Calu3 (cell line): ENCODE measurements at regions of chr9 and their contacts with region 1.

Region 1: GRCh38 chr9:83062656-83063527 is at the start of gene RASEF:
- DNase-seq: peak; percentile 91
- H3K4me3 Mint-ChIP-seq: peak within 1 kb of the TSS; percentile 85
- H3K27ac Mint-ChIP-seq: peak within 1 kb of the TSS; percentile 86
- H3K4me1 Mint-ChIP-seq: peaks cover 37% of the 10 kb centered on the region
- H3K27me3 Mint-ChIP-seq: no peaks in the 10 kb centered on the region
- CTCF ChIP-seq: no peak
- total RNA-seq, gene RASEF: 38.8 and 47.7 TPM in 2 replicates

Region 2: DNA sequence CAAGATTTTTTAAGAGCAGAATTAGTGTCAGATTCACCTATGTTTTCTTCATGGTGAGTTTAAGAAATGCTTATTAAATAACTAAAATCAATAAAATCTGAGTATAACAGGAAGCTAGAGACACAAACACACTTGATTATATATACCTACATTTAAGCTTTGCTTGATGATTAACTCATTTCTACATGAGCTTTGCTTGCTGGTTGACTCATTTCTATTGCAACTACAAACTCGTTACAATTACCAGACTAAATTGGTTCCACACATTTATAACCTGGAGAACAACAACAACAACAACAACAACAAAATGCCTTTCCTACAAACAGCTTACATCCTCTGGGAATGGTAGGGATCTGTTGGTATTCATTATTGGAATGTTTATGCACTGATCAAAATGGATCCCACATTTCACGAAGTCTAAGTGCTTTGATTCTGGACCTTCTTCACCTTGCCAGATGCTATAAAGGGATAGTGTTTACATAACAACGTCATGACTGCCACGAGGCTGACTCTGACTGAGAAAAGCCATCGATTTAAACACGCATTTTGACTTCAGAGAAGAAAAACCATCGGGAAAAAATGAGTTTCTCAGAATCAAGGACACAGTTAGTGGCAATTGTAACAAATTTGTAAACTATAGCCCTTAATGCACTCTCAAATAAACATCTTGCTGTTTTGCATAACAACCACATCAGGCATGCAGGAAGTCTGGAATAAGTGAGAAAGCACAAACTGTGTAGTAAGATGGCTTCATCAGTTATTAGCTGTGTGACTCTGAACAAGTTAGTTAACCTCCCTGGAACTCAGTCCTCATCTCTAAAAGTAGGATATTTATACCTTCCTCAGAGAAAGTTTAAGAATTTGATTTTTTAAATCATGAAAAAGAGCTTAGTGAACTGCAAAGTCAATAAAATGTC is 49.7 kb before region 1 on chr9:
- CTCF ChIA-PET with region 1: interaction called, 9 read pairs
- intact Hi-C with region 1: loop called (anchors 5 kb)
- DNase-seq: no peak
- H3K4me3 Mint-ChIP-seq: peak overlapping the region; percentile 19
- H3K27ac Mint-ChIP-seq: peak overlapping the region; percentile 85
- H3K4me1 Mint-ChIP-seq: peaks cover 19% of the 10 kb centered on the region
- H3K27me3 Mint-ChIP-seq: no peaks in the 10 kb centered on the region
- CTCF ChIP-seq: no peak

Region 3: GRCh38 chr9:83027153-83027891 is 35.6 kb before region 1 on chr9:
- CTCF ChIA-PET with region 1: interaction called, 9 read pairs
- intact Hi-C with region 1: loop called (anchors 1 kb)
- DNase-seq: no peak
- H3K4me3 Mint-ChIP-seq: peak overlapping the region; percentile 14
- H3K27ac Mint-ChIP-seq: peak overlapping the region; percentile 95
- H3K4me1 Mint-ChIP-seq: peaks cover 71% of the 10 kb centered on the region
- H3K27me3 Mint-ChIP-seq: no peaks in the 10 kb centered on the region
- CTCF ChIP-seq: no peak

Region 4: GRCh38 chr9:83130541-83130940 is 67.6 kb after region 1 on chr9:
- CTCF ChIA-PET with region 1: no interaction called
- intact Hi-C with region 1: loop called (anchors 5 kb)
- DNase-seq: peak; percentile 34
- H3K4me3 Mint-ChIP-seq: no peak overlapping the region
- H3K27ac Mint-ChIP-seq: peak overlapping the region; percentile 90
- H3K4me1 Mint-ChIP-seq: peaks cover 26% of the 10 kb centered on the region
- H3K27me3 Mint-ChIP-seq: no peaks in the 10 kb centered on the region
- CTCF ChIP-seq: no peak

Region 5: GRCh38 chr9:83166369-83166768 is 103.5 kb after region 1 on chr9:
- CTCF ChIA-PET with region 1: interaction called, 5 read pairs
- intact Hi-C with region 1: loop called (anchors 10 kb)
- DNase-seq: peak; percentile 78
- H3K4me3 Mint-ChIP-seq: peak overlapping the region; percentile 43
- H3K27ac Mint-ChIP-seq: peak overlapping the region; percentile 83
- H3K4me1 Mint-ChIP-seq: peaks cover 45% of the 10 kb centered on the region
- H3K27me3 Mint-ChIP-seq: no peaks in the 10 kb centered on the region
- CTCF ChIP-seq: no peak